ENCODE measurements at regions of chr4 and their contacts with region 1.

Region 1: GRCh38 chr4:180811556-180811955 is 1431.6 kb upstream of the TENM3 start:
- DNase-seq: no peak
- H3K4me3 ChIP-seq: no peak overlapping the region
- H3K27ac ChIP-seq: no peak overlapping the region
- H3K4me1 ChIP-seq: no peaks in the 10 kb centered on the region
- H3K27me3 ChIP-seq: no peaks in the 10 kb centered on the region
- CTCF ChIP-seq: no peak
- POLR2A ChIP-seq: no peak

Region 2: GRCh38 chr4:180521181-180521580 is 290.4 kb before region 1 on chr4:
- intact Hi-C with region 1: no loop called
- DNase-seq: no peak
- H3K4me3 ChIP-seq: no peak overlapping the region
- H3K27ac ChIP-seq: no peak overlapping the region
- H3K4me1 ChIP-seq: no peaks in the 10 kb centered on the region
- H3K27me3 ChIP-seq: no peaks in the 10 kb centered on the region
- CTCF ChIP-seq: no peak
- POLR2A ChIP-seq: no peak

Region 3: DNA sequence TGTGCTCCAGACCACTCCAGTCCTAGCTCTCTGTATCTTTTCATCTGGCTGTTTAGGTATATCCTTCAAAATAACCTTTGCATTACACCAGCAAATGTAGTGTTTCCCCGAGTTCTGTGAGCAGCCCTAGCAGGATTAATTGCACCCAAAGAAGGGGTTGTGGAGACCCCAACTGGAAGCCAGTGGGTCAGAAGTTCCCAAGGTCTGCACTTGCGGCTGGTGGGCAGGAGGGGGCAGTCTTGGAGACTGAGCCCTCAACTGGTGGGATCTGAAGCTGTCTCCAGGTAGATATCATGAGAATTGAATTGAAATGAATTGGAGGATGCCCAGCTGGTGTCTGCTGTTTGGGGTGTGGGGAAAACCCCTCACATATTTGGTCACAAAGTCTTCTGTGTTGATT is 53.6 kb before region 1 on chr4:
- intact Hi-C with region 1: no loop called
- DNase-seq: no peak
- H3K4me3 ChIP-seq: no peak overlapping the region
- H3K27ac ChIP-seq: no peak overlapping the region
- H3K4me1 ChIP-seq: no peaks in the 10 kb centered on the region
- H3K27me3 ChIP-seq: no peaks in the 10 kb centered on the region
- CTCF ChIP-seq: no peak
- POLR2A ChIP-seq: no peak

Region 4: DNA sequence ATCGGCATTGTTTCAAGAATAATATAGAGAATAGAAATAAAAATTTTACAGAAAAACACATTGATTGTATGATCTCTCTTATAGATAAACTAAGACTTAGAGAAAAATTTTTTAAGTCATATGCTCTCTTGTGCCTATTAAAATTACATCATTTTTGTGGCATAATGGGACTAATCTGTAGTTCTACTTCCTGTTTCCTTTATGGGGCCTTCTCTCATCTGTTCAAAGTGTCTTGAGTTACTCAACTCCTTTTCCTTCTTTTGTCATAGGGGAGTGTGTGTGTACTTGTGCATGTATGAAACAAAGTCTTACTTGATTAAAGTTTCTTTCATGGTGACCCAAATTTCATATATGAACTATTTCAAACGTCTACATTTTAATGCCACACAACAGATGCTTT is 17.2 kb before region 1 on chr4:
- intact Hi-C with region 1: no loop called
- DNase-seq: no peak
- H3K4me3 ChIP-seq: no peak overlapping the region
- H3K27ac ChIP-seq: no peak overlapping the region
- H3K4me1 ChIP-seq: no peaks in the 10 kb centered on the region
- H3K27me3 ChIP-seq: no peaks in the 10 kb centered on the region
- CTCF ChIP-seq: no peak
- POLR2A ChIP-seq: no peak

Region 5: GRCh38 chr4:182265881-182266280 is 1454.3 kb after region 1 on chr4:
- intact Hi-C with region 1: loop called (anchors 10 kb)
- DNase-seq: no peak
- H3K4me3 ChIP-seq: no peak overlapping the region
- H3K27ac ChIP-seq: no peak overlapping the region
- H3K4me1 ChIP-seq: no peaks in the 10 kb centered on the region
- H3K27me3 ChIP-seq: no peaks in the 10 kb centered on the region
- CTCF ChIP-seq: no peak
- POLR2A ChIP-seq: no peak